ENCODE measurements at regions of chr12 and their contacts with region 1.

Region 1: GRCh38 chr12:20383612-20384011 is 15.3 kb downstream of the PDE3A start:
- DNase-seq: no peak
- ATAC-seq: peak; percentile 19 to 49
- H3K4me3 ChIP-seq: no peak overlapping the region
- H3K27ac ChIP-seq: peak overlapping the region; percentile 23
- H3K4me1 ChIP-seq: no peaks in the 10 kb centered on the region
- H3K27me3 ChIP-seq: no peaks in the 10 kb centered on the region

Region 2: DNA sequence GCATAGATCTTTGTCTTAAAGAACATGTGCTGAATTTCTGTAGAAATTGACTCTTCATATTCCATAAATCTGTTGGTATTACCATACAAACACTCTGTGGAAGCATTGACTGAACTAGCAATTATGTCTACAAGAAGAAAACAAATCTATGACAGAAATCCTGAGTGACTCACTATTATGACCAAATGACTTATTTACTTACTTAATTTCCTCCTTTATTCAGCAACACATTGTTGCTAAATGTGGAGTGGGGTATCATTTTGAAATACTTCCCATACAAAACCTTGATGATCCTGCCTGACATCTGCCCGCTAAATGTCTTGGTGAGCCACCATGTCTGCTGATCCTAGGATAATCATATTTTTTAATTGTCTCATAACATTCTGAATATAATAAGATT is 212.4 kb after region 1 on chr12:
- intact Hi-C with region 1: loop called in 1 of 4 experiments (anchors 10 kb)
- DNase-seq: no peak
- ATAC-seq: no peak
- H3K4me3 ChIP-seq: no peak overlapping the region
- H3K27ac ChIP-seq: no peak overlapping the region
- H3K4me1 ChIP-seq: no peaks in the 10 kb centered on the region
- H3K27me3 ChIP-seq: no peaks in the 10 kb centered on the region